Sciatic nerve (tissue), 2 donors: ENCODE measurements at regions of chr11 and their contacts with region 1.

Region 1: DNA sequence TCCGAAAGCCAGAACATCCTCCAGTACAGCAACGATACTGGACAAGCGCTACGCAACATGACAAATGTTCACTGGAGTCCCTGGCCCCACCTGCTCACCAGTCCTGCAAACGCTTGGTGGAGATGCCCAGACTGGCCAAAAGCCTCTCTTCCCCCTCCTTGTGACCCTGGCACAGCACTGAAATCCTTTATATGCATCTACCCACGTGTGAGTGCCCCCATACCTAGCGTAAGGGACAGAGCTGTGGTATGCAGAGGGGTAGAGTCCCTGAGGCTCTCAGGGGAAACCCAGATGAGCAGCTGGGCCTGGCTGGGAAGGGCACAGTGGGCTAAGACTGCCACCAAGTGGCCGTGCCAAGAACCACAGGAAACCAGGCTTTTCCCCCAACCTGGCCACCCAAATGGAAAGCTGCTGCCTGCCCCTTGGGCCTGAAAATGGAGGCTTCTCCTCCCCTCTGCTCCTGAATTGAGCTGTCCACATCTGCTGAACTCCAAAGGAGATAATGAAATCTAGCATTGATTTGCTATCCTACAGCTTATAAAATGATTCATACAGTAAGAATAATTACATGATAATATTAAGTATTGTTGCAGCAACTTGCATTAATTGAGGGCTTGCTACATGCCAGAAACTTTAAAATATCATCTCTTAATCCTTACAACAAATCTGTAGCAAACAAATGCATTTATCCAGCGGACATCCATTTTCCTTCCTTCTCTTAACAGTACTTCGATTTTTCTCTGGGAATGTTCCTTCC is 24.8 kb upstream of the TTC12 start:
- DNase-seq: peak; percentile 78
- ATAC-seq: peak; percentile 77

Region 2: GRCh38 chr11:112289588-112290492 is 999.8 kb before region 1 on chr11:
- intact Hi-C with region 1: loop called (anchors 10 kb)
- DNase-seq: peak; percentile 90
- ATAC-seq: peak; percentile 93

Region 3: GRCh38 chr11:112588252-112588694 is 701.3 kb before region 1 on chr11:
- intact Hi-C with region 1: loop called (anchors 5 kb)
- DNase-seq: peak; percentile 76
- ATAC-seq: peak; percentile 90

Region 4: GRCh38 chr11:113806406-113806805 is 516.8 kb after region 1 on chr11:
- intact Hi-C with region 1: no loop called
- DNase-seq: no peak
- ATAC-seq: no peak